ENCODE measurements at regions of chr5 and their contacts with region 1.

Region 1: DNA sequence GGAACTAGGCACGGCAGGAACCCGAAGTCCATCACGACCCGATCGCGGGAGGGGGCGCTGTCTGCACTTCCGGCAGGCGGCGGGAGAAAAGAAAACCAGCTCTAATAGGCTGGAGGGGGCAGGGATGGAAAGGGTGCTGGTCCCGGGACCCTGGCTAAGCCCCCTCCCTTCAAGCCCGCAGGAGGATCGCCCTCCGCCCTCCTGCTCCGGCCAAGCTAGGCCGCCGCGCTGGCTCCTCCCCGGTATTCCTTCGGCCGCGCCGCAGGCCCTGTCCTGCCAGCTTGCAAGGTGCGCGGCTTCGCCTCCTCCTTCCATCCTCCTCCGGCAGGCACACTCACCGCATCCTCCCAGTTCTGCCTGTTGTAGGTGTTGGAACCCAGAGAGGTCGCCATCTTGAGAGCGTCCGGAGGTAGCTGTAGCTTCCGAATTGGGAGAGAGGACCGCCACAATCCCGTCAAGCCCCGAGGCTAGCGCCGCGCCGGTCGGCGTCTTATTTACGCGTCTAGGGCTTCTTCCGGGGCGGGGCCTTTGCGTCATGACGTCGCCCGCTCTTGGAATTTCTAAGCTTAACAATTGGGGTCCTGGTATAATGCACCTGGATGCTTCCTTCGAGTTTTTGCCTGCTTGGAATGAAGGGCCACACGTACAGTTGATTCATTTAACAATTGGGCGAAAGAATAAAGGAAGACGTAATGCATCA is at the start of gene RBM22:
- DNase-seq: peak; percentile 77 to 93 (median 92)
- ATAC-seq: peak; percentile 96
- H3K4me3 ChIP-seq: peak within 1 kb of the TSS; percentile 80
- H3K4me3 Mint-ChIP-seq: no peak within 1 kb of the TSS
- H3K27ac ChIP-seq: peak within 1 kb of the TSS; percentile 96
- H3K27ac Mint-ChIP-seq: no peak within 1 kb of the TSS
- H3K4me1 ChIP-seq: peaks cover 13 to 14% of the 10 kb centered on the region in 2 donors
- H3K4me1 Mint-ChIP-seq: peaks cover 0 to 12% (median 7%) of the 10 kb centered on the region in 7 donors
- H3K27me3 ChIP-seq: no peaks in the 10 kb centered on the region
- H3K27me3 Mint-ChIP-seq: peaks cover 0 to 3% (median 0%) of the 10 kb centered on the region in 5 donors
- total RNA-seq, gene RBM22: 74.2 to 103 (median 93.1) TPM

Region 2: GRCh38 chr5:150278916-150279315 is 421.8 kb before region 1 on chr5:
- CTCF ChIA-PET with region 1: no interaction called
- POLR2A ChIA-PET with region 1: no interaction called
- intact Hi-C with region 1: no loop called
- DNase-seq: no peak
- ATAC-seq: no peak
- H3K4me3 ChIP-seq: no peak overlapping the region
- H3K4me3 Mint-ChIP-seq: no peak overlapping the region
- H3K27ac ChIP-seq: no peak overlapping the region
- H3K27ac Mint-ChIP-seq: no peak overlapping the region
- H3K4me1 ChIP-seq: no peaks in the 10 kb centered on the region
- H3K4me1 Mint-ChIP-seq: no peaks in the 10 kb centered on the region
- H3K27me3 ChIP-seq: no peaks in the 10 kb centered on the region
- H3K27me3 Mint-ChIP-seq: peaks cover 0 to 19% (median 0%) of the 10 kb centered on the region in 5 donors

Region 3: GRCh38 chr5:150357326-150358260 is 343.2 kb before region 1 on chr5 and contains the start of gene TCOF1:
- CTCF ChIA-PET with region 1: interaction called, 3 read pairs
- POLR2A ChIA-PET with region 1: no interaction called
- intact Hi-C with region 1: loop called (anchors 1 kb)
- DNase-seq: peak; percentile 94 to 98 (median 97)
- ATAC-seq: peak; percentile 100
- H3K4me3 ChIP-seq: peak within 1 kb of the TSS; percentile 62
- H3K4me3 Mint-ChIP-seq: peak within 1 kb of the TSS; percentile 85 to 95 (median 91)
- H3K27ac ChIP-seq: peak within 1 kb of the TSS; percentile 81
- H3K27ac Mint-ChIP-seq: peak within 1 kb of the TSS; percentile 87 to 97 (median 96)
- H3K4me1 ChIP-seq: peaks cover 23 to 24% of the 10 kb centered on the region in 2 donors
- H3K4me1 Mint-ChIP-seq: peaks cover 35 to 54% (median 48%) of the 10 kb centered on the region in 7 donors
- H3K27me3 ChIP-seq: no peaks in the 10 kb centered on the region
- H3K27me3 Mint-ChIP-seq: peaks cover 0 to 2% (median 0%) of the 10 kb centered on the region in 5 donors
- total RNA-seq, gene TCOF1: 45.9 to 60.0 (median 54.6) TPM

Region 4: GRCh38 chr5:150458819-150459557 is 241.8 kb before region 1 on chr5:
- CTCF ChIA-PET with region 1: interaction called, 11 read pairs
- POLR2A ChIA-PET with region 1: interaction called, 4 read pairs
- intact Hi-C with region 1: loop called (anchors 1 to 2 kb)
- DNase-seq: peak; percentile 72 to 92 (median 85)
- ATAC-seq: peak; percentile 99
- H3K4me3 ChIP-seq: no peak overlapping the region
- H3K4me3 Mint-ChIP-seq: peak overlapping the region in 9 of 10 donors; percentile 4 to 70 (median 60)
- H3K27ac ChIP-seq: peak overlapping the region; percentile 23
- H3K27ac Mint-ChIP-seq: peak overlapping the region; percentile 40 to 91 (median 77)
- H3K4me1 ChIP-seq: peaks cover 0 to 30% of the 10 kb centered on the region in 2 donors
- H3K4me1 Mint-ChIP-seq: peaks cover 17 to 50% (median 42%) of the 10 kb centered on the region in 7 donors
- H3K27me3 ChIP-seq: no peaks in the 10 kb centered on the region
- H3K27me3 Mint-ChIP-seq: no peaks in the 10 kb centered on the region

Region 5: DNA sequence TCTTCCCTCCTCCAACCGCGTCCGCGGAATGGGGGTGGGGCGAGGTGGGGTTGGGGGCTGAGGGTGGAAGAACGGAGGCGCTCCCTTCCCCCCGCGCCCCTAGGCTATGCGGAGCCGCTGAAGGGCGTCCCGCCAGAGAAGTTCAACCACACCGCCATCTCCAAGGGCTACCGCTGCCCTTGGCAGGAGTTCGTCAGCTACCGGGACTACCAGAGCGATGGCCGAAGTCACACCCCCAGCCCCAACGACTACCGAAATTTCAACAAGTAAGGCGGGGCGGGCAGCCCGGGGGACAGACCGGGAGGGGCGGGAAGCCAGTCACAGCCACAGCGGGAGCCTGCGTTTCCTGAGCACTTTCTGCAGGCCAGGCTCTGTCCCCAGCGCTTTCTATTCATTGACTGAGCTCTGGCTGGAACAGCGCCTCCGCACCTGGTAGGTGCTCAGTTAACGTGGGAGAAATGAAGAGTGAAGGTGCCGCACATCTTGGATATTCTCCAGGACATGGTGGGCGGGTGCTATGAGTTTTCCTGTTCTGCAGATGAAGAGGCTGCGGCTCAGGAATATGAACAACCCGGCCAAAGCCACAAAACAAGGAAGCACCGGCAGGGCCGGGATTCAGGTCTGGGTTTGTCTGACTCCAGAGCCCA is 28.4 kb before region 1 on chr5:
- CTCF ChIA-PET with region 1: interaction called, 3 read pairs
- POLR2A ChIA-PET with region 1: no interaction called
- intact Hi-C with region 1: loop called in 1 of 2 experiments (anchors 2 kb)
- DNase-seq: peak in 4 of 9 donors; percentile 14 to 34 (median 18)
- ATAC-seq: peak; percentile 74
- H3K4me3 ChIP-seq: peak overlapping the region; percentile 56
- H3K4me3 Mint-ChIP-seq: peak overlapping the region; percentile 81 to 88 (median 84)
- H3K27ac ChIP-seq: no peak overlapping the region
- H3K27ac Mint-ChIP-seq: no peak overlapping the region
- H3K4me1 ChIP-seq: peaks cover 2 to 9% of the 10 kb centered on the region in 2 donors
- H3K4me1 Mint-ChIP-seq: peaks cover 0 to 16% (median 11%) of the 10 kb centered on the region in 7 donors
- H3K27me3 ChIP-seq: peaks cover 4 to 7% of the 10 kb centered on the region in 2 donors
- H3K27me3 Mint-ChIP-seq: peaks cover 9 to 28% (median 17%) of the 10 kb centered on the region in 5 donors

Region 6: DNA sequence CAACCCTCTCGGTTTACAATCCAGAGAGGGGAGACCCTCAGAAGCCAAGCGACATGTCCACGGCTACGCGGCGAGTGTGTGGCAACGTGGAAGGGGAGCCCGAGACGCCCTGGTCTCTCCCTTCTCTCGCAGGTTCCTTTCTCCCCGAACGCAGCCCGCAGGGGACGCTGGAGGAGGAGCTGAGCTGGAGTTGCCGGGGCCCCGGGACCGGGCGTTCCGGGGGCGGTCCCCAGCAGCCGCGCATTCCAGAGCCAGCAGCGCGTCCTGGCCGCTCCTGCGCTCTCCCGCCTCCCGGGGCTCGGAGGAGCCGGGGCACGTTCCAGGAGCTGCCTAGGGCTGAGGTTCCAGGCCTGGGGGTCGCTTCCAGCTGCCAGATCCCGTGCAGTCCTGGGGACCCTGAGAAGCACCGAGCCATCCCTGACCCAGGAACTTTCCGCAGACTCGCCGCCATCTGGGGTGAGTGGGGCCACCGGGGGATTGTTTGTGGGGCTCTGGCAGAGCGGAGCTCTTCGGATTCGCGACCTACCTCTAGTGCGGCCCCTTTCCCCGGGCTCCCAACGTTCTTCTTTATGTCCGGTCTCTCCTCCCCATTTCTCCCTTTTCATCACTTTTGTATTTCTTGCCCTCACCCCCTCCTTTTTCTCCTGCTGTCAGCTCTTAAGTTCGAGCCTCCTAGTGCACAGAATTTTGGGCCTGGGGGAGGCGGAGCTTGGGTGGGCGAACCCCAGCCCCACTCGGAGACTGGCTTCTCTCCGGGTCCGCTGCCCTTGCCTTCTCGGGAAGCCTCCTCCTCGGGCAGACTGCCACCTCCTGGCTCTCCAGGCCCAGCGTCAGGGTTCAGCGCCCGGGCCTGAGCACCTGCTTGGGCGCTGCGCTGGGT is 78.0 kb after region 1 on chr5 and contains the start of gene SMIM3:
- CTCF ChIA-PET with region 1: interaction called, 21 read pairs
- POLR2A ChIA-PET with region 1: interaction called, 27 read pairs
- intact Hi-C with region 1: loop called (anchors 1 kb)
- DNase-seq: peak; percentile 45 to 71 (median 62)
- ATAC-seq: peak; percentile 77
- H3K4me3 ChIP-seq: peak within 1 kb of the TSS; percentile 80
- H3K4me3 Mint-ChIP-seq: peak within 1 kb of the TSS; percentile 95 to 100 (median 98)
- H3K27ac ChIP-seq: peak within 1 kb of the TSS; percentile 73
- H3K27ac Mint-ChIP-seq: peak within 1 kb of the TSS; percentile 91 to 98 (median 95)
- H3K4me1 ChIP-seq: peaks cover 17 to 41% of the 10 kb centered on the region in 2 donors
- H3K4me1 Mint-ChIP-seq: peaks cover 34 to 62% (median 57%) of the 10 kb centered on the region in 7 donors
- H3K27me3 ChIP-seq: no peaks in the 10 kb centered on the region
- H3K27me3 Mint-ChIP-seq: peaks cover 0 to 5% (median 0%) of the 10 kb centered on the region in 5 donors
- total RNA-seq, gene SMIM3: 5.2 to 17.9 (median 7.9) TPM

Region 7: DNA sequence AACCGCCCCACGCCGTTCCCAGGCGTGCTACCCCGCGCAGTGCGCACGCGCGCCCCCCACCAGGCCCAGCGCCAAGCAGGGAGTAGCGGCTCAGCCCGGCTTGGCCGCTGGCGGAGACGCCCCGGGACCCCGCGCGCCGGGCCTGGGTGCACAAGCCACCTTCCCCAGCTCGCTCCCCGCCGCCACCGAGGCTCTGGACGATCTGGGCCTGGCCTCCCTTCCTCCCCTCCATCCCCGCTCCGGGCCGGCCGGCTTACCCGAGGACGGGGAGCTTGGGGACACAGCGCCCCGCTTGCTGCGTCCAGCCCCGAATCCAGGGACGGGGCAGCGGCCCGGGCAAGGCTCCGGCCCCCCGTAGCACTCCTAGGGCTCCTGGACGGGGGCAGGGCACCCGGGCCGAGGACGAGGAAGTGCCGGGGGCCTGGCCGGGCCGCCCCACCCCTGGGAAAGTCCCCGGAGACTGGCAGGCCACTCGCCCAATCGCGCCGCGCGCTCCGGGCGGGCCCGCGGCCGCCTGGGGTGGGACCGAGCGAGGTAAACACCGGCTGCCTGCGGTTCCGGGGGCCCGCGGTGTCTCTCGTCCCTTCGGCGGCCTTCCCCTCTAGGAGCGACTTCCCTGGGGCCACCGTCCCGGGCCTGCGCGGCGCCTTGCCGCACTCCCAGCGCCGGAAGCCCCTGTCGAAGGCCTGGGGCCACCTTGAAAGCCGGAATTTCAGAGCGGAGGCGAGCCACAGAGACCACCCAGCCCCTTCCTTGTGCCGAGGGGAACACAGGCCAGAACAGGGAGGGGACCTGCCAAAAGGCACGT is 380.1 kb after region 1 on chr5 and contains the start of gene TNIP1:
- CTCF ChIA-PET with region 1: no interaction called
- POLR2A ChIA-PET with region 1: no interaction called
- intact Hi-C with region 1: loop called (anchors 1 to 2 kb)
- DNase-seq: peak; percentile 86 to 99 (median 90)
- ATAC-seq: peak; percentile 94
- H3K4me3 ChIP-seq: peak within 1 kb of the TSS; percentile 86
- H3K4me3 Mint-ChIP-seq: peak within 1 kb of the TSS; percentile 85 to 95 (median 90)
- H3K27ac ChIP-seq: peak within 1 kb of the TSS; percentile 96
- H3K27ac Mint-ChIP-seq: peak within 1 kb of the TSS; percentile 86 to 95 (median 91)
- H3K4me1 ChIP-seq: peaks cover 37 to 69% of the 10 kb centered on the region in 2 donors
- H3K4me1 Mint-ChIP-seq: peaks cover 53 to 84% (median 73%) of the 10 kb centered on the region in 7 donors
- H3K27me3 ChIP-seq: no peaks in the 10 kb centered on the region
- H3K27me3 Mint-ChIP-seq: no peaks in the 10 kb centered on the region
- total RNA-seq, gene TNIP1: 124 to 234 (median 131) TPM

Measured in naive thymus-derived CD4-positive, alpha-beta T cell (primary cell).